ENCODE measurements at regions of chr6 and their contacts with region 1.

Region 1: GRCh38 chr6:2853761-2854395 is 12.2 kb upstream of the SERPINB1 start:
- DNase-seq: no peak
- ATAC-seq: peak; percentile 21 to 32

Region 2: GRCh38 chr6:2810092-2810671 is 43.7 kb before region 1 on chr6:
- intact Hi-C with region 1: no loop called
- DNase-seq: no peak
- ATAC-seq: peak; percentile 50 to 83

Region 3: DNA sequence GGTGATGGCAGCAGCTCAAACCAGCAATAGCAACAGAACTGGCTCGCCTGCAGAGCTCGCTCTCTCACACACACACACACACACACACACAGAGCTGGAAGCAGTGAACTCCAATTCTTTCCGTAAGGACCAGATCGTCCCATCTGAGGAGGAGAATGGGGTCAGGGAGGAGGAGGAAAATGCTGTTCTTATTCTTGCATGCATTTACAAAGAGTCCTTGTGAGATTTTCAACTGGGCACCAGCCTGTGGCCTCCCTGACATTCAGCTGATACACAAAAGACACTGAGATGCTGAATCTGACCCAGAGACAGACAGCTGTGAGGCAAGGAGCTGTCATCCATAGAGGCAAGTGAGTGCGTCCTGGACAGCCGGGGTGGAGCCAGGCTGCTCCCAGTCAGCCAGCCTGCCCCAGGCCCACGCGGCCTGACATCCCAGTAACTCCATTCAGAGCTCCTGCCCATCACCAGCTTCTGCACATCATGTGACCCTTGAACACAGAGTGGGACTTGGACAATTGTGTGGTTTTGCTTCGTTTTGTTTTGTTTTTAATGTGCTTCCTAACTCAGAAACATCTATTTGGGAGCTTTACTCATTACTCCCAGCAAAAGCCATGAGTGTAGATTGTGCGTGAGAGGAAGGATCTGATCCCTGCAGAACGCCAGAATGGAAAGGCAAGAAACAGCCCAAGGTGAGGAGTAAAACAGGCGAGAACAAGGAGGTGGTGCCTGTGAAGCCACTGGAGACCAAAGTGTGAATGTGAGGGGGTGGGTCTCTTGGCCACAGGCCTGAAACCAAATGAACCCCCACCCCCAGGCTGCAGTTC is 47.2 kb after region 1 on chr6:
- intact Hi-C with region 1: loop called in 1 of 2 experiments (anchors 10 kb)
- DNase-seq: peak; percentile 48
- ATAC-seq: peak; percentile 5 to 10

Region 4: DNA sequence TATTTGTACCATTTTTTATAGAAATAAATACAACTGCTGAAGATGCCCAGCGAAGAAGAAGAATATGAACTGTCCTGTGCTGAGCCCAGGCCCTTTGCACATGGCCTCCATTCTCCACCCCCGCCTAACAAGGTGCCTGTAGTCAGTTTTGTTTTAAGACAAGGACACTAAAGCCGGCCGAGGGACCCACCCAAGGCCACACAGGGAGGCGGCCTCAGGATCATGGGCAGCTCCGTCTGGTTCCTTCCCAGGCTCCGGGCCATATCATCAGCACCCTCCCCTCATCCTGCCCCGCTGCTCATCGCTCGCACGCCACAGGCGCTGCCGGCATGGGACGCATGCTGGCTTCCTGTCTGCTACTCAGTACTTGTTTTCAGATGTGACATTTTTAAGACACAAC is 426.2 kb after region 1 on chr6:
- intact Hi-C with region 1: no loop called
- DNase-seq: no peak
- ATAC-seq: no peak